ENCODE measurements at regions of chr16 and their contacts with region 1.

Region 1: DNA sequence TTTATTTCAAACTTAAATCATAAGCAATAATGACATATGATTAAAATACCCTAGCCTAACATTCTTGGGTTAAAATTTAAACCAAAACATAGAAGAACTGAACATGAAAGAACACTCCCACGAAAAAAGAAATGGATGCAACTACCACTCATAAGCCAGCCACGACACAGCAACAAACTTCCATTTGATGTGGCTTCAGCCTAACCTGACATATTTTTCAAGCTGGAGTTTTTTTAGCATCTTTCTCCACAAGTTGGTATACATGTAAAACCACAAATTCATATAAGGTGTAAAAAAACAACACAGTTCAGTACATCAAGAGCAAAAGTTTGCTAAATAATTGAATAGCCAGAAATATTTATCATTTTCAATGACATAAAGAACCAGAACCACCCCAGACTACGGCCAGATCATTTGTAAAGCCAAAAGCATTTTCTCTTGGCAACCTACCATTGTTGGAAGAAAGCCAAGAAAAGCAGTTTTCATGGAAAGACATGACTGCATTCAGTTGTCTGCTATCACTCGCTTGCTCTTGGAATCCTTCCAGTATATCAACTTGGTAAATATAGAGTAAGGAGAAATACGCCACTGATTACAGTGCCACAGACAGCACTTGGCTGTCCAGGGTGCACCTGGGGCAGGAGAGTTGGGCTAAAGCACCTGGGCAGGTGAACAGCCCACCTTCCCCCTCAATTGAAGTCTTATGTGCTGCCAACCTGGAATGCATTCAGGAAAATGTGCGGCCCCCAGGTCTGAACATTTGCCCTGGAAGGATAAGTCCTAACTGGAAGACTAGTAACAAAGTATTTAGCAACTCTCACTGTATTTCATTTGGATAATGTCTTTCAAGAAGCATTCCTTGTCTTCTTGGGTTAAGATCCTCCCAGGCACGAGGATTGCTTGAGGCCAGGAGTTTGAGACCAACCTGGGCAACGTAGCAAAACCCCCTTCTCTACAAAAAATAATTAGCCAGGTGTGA is 60.5 kb downstream of the CREBBP start:
- DNase-seq: peak; percentile 98
- H3K4me3 ChIP-seq: no peak overlapping the region
- H3K27ac ChIP-seq: peak overlapping the region; percentile 46
- H3K4me1 ChIP-seq: peaks cover 25% of the 10 kb centered on the region
- H3K27me3 ChIP-seq: no peaks in the 10 kb centered on the region
- CTCF ChIP-seq: no peak
- POLR2A ChIP-seq: no peak

Region 2: GRCh38 chr16:3625911-3626732 is 193.9 kb before region 1 on chr16:
- CTCF ChIA-PET with region 1: no interaction called
- POLR2A ChIA-PET with region 1: no interaction called
- dilution Hi-C with region 1: no loop called
- intact Hi-C with region 1: no loop called
- DNase-seq: peak; percentile 25
- H3K4me3 ChIP-seq: no peak overlapping the region
- H3K27ac ChIP-seq: no peak overlapping the region
- H3K4me1 ChIP-seq: peaks cover 5% of the 10 kb centered on the region
- H3K27me3 ChIP-seq: no peaks in the 10 kb centered on the region
- CTCF ChIP-seq: no peak
- POLR2A ChIP-seq: no peak

Region 3: GRCh38 chr16:3807425-3808123 is 12.5 kb before region 1 on chr16:
- CTCF ChIA-PET with region 1: no interaction called
- POLR2A ChIA-PET with region 1: no interaction called
- dilution Hi-C with region 1: no loop called
- intact Hi-C with region 1: no loop called
- DNase-seq: no peak
- H3K4me3 ChIP-seq: no peak overlapping the region
- H3K27ac ChIP-seq: no peak overlapping the region
- H3K4me1 ChIP-seq: no peaks in the 10 kb centered on the region
- H3K27me3 ChIP-seq: no peaks in the 10 kb centered on the region
- CTCF ChIP-seq: no peak
- POLR2A ChIP-seq: no peak

Region 4: GRCh38 chr16:3836641-3837040 is 16.6 kb after region 1 on chr16:
- CTCF ChIA-PET with region 1: interaction called, 3 read pairs
- POLR2A ChIA-PET with region 1: no interaction called
- dilution Hi-C with region 1: no loop called
- intact Hi-C with region 1: loop called (anchors 2 kb)
- DNase-seq: no peak
- H3K4me3 ChIP-seq: no peak overlapping the region
- H3K27ac ChIP-seq: no peak overlapping the region
- H3K4me1 ChIP-seq: no peaks in the 10 kb centered on the region
- H3K27me3 ChIP-seq: no peaks in the 10 kb centered on the region
- CTCF ChIP-seq: no peak
- POLR2A ChIP-seq: no peak